CD8-positive, alpha-beta T cell (primary cell): ENCODE measurements at regions of chr7 and their contacts with region 1.

Region 1: DNA sequence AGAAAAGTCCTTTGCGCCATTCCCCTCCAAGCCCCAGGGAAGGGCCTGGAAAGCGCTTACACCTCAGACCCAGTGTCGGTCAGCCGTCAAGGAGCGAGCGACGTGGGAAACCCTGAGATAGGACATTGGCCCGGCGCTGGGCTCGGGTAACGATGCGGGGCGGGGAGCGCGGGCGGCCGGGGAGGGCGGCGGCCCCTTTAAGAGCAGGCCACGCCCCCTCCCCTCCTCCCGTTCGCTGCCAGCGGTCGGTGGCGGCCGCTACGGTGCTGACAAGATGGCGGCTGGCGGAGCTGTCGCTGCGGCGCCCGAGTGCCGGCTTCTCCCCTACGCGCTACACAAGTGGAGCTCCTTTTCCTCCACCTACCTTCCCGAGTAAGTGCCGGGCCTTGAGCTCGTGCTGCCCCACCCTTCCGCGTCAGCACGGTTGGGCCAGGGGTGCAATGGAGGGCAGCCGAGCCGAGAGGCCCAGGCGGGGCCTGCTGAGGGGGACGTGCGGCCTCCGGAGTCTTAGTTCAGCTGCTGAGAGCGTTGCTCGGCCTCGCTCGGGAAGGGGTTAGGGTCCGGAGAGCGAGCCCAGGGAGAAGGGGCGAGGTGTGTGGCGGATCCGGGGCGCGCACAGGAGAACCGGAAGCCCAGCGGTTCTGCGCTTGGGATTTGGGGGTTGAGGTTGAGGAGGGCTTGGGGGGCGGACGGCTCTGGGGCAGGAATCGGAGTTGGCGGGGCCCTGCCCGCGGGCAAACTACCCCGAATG is at the start of gene MKLN1:
- DNase-seq: peak; percentile 75 to 94 (median 89)
- ATAC-seq: peak; percentile 94
- H3K4me3 ChIP-seq: peak within 1 kb of the TSS; percentile 95 to 100
- H3K4me3 Mint-ChIP-seq: peak within 1 kb of the TSS; percentile 92
- H3K27ac ChIP-seq: peak within 1 kb of the TSS; percentile 85 to 95
- H3K27ac Mint-ChIP-seq: peak within 1 kb of the TSS; percentile 97
- H3K4me1 ChIP-seq: peaks cover 33% of the 10 kb centered on the region
- H3K4me1 Mint-ChIP-seq: peaks cover 68% of the 10 kb centered on the region
- H3K27me3 ChIP-seq: no peaks in the 10 kb centered on the region
- H3K27me3 Mint-ChIP-seq: no peaks in the 10 kb centered on the region
- CTCF ChIP-seq: no peak
- total RNA-seq, gene MKLN1: 43.2 to 54.5 TPM

Region 2: GRCh38 chr7:130668257-130669084 is 659.3 kb before region 1 on chr7 and contains the start of gene COPG2:
- CTCF ChIA-PET with region 1: no interaction called
- POLR2A ChIA-PET with region 1: no interaction called
- intact Hi-C with region 1: loop called in 1 of 2 experiments (anchors 5 kb)
- DNase-seq: peak; percentile 34 to 87 (median 72)
- ATAC-seq: peak; percentile 81
- H3K4me3 ChIP-seq: peak within 1 kb of the TSS; percentile 73 to 77
- H3K4me3 Mint-ChIP-seq: peak within 1 kb of the TSS; percentile 93
- H3K27ac ChIP-seq: peak within 1 kb of the TSS; percentile 43 to 61
- H3K27ac Mint-ChIP-seq: peak within 1 kb of the TSS; percentile 76
- H3K4me1 ChIP-seq: no peaks in the 10 kb centered on the region
- H3K4me1 Mint-ChIP-seq: peaks cover 20% of the 10 kb centered on the region
- H3K27me3 ChIP-seq: no peaks in the 10 kb centered on the region
- H3K27me3 Mint-ChIP-seq: peaks cover 3% of the 10 kb centered on the region
- CTCF ChIP-seq: no peak
- total RNA-seq, gene COPG2: 2.7 to 3.0 TPM

Region 3: DNA sequence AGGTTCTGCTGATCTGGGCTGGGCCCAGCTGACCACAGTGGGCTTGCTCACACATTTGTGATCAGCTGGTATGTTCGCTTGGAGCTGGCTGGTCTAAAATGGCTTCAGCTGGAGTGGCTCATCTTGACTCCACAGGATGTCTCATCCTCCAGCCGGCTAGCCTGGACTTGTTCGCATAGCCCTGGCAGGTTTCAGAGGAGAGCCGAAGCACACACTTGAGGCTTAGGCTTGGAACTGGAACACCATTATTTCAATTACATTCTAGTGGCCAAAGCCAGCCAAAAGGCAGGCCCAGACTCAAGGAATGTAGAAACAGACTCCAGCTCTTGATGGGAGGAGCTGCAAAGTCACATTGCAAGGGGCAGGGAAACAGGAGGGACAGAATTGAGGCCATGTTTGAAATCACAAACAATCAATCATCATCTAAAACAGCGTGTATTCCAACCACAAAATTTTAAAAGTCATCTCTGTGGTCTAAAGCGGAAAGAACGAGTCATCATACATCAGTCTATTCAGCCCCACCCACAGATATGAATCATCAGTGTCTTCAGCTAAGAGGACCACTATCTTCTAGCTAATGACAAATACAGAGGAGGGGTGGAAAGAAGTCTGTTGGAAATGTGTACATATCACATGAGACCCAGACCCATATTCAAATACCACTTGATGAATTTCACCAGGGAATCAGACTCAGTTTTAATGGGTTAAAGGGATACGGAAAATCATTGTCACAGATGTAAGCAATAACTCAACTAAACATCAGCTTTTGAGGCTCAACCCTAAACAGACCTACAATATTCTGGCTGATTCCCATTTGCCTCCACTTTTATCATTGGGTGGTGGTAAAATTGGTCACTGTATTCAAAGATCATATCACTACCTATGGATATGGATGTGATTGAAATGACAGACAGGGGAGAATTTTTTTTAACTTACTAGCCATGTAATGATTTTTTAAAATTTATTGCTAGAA is 139.1 kb before region 1 on chr7:
- CTCF ChIA-PET with region 1: no interaction called
- POLR2A ChIA-PET with region 1: no interaction called
- intact Hi-C with region 1: loop called in 1 of 2 experiments (anchors 1 kb)
- DNase-seq: peak; percentile 3 to 91 (median 56)
- ATAC-seq: peak; percentile 88
- H3K4me3 ChIP-seq: no peak overlapping the region
- H3K4me3 Mint-ChIP-seq: no peak overlapping the region
- H3K27ac ChIP-seq: peak overlapping the region; percentile 6 to 73
- H3K27ac Mint-ChIP-seq: peak overlapping the region; percentile 42
- H3K4me1 ChIP-seq: peaks cover 18% of the 10 kb centered on the region
- H3K4me1 Mint-ChIP-seq: peaks cover 22% of the 10 kb centered on the region
- H3K27me3 ChIP-seq: no peaks in the 10 kb centered on the region
- H3K27me3 Mint-ChIP-seq: no peaks in the 10 kb centered on the region
- CTCF ChIP-seq: no peak

Region 4: DNA sequence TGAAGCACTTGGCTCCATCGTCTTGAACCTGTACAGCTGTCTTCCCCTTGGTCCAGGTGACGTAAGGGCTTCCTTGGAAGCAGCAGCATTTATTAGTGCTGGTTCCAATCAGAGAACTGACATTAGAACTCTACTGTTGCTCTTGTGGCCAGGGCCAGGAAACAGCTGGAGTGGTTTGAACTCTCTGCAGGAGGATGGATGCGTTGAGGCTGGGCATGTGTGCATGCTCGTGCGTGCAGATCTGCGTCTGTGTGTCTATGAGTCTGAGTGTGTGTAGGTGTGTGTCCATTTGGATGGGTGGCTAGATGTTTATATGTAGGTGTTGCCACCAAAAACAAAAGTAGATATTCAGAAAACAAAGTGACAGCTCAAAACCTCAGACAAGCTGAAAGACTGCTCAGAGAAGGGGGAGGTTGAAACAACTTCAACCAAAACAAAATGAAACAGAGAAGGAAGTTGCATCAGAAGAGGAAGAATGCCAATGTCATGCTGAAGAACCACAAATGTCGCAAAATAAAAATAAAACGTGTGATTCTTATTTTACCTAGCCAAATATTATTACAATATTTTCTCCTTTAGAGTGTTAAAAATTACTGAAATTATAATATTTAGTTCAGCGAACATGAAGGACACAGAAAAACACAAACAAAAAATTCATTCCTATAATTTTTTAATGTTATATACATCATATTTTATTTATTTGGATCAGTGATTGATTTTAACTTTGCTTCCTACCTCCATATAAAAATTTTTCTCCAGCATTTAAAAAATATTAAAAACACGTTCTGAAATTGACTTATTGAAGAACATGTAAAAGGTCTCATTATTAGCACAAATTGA is 96.2 kb before region 1 on chr7:
- CTCF ChIA-PET with region 1: no interaction called
- POLR2A ChIA-PET with region 1: interaction called, 4 read pairs
- intact Hi-C with region 1: loop called (anchors 1 to 5 kb)
- DNase-seq: peak; percentile 38 to 87 (median 66)
- ATAC-seq: peak; percentile 81
- H3K4me3 ChIP-seq: peak overlapping the region; percentile 13 to 31
- H3K4me3 Mint-ChIP-seq: peak overlapping the region; percentile 68
- H3K27ac ChIP-seq: peak overlapping the region; percentile 63 to 66
- H3K27ac Mint-ChIP-seq: peak overlapping the region; percentile 91
- H3K4me1 ChIP-seq: peaks cover 32% of the 10 kb centered on the region
- H3K4me1 Mint-ChIP-seq: peaks cover 35% of the 10 kb centered on the region
- H3K27me3 ChIP-seq: no peaks in the 10 kb centered on the region
- H3K27me3 Mint-ChIP-seq: no peaks in the 10 kb centered on the region
- CTCF ChIP-seq: no peak

Region 5: DNA sequence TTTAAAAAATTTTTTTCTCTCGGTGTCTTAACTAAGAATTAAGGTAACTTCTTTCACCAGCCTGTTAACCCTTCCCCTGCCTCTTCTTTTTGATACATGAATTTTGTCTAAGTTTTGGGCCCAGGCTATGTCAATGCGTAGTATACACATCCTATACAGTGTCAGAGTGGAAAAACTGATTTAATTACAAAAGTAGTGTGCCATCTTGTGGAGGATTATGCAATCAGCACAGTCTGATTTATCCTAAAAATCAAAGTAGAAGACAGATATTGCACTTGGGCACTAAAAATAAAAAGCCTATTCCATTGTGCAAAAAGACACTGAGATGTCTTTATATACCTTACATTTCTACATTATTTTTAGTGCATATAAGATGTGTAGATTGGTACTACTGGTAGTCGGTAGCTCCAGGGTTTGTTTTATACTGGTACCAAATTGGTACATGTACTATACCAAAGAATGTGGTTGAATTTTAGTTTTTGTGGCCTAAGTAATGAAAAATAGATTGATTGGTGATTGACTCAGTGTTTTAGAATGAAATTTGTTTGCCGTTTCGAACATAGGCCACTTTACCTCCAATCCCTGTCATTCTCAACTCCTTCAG is 96.5 kb after region 1 on chr7:
- CTCF ChIA-PET with region 1: interaction called, 3 read pairs
- POLR2A ChIA-PET with region 1: no interaction called
- intact Hi-C with region 1: loop called in 1 of 2 experiments (anchors 2 kb)
- DNase-seq: peak in 2 of 9 experiments; percentile 48 to 62
- ATAC-seq: peak; percentile 97
- H3K4me3 ChIP-seq: no peak overlapping the region
- H3K4me3 Mint-ChIP-seq: no peak overlapping the region
- H3K27ac ChIP-seq: no peak overlapping the region
- H3K27ac Mint-ChIP-seq: no peak overlapping the region
- H3K4me1 ChIP-seq: no peaks in the 10 kb centered on the region
- H3K4me1 Mint-ChIP-seq: peaks cover 5% of the 10 kb centered on the region
- H3K27me3 ChIP-seq: no peaks in the 10 kb centered on the region
- H3K27me3 Mint-ChIP-seq: no peaks in the 10 kb centered on the region
- CTCF ChIP-seq: peak; percentile 74